H1 (cell line): ENCODE measurements at regions of chr5 and their contacts with region 1.

Region 1: GRCh38 chr5:66814146-66814991 is 218.2 kb downstream of the MAST4 start:
- DNase-seq: no peak
- H3K4me3 ChIP-seq: no peak overlapping the region
- H3K27ac ChIP-seq: no peak overlapping the region
- H3K4me1 ChIP-seq: peaks cover 0 to 4% (median 0%) of the 10 kb centered on the region in 4 experiments; a peak in 1 of 7 replicates
- H3K27me3 ChIP-seq: no peaks in the 10 kb centered on the region
- CTCF ChIP-seq: peak in 2 of 3 experiments; percentile 50 to 69; a peak in 2 of 4 replicates
- EP300 ChIP-seq: no peak
- POLR2A ChIP-seq: no peak
- RAD21 ChIP-seq: peak; percentile 59 to 68

Region 2: GRCh38 chr5:66796305-66797292 is 17.8 kb before region 1 on chr5:
- CTCF ChIA-PET with region 1: interaction called, 10 read pairs
- POLR2A ChIA-PET with region 1: no interaction called
- DNase-seq: no peak
- H3K4me3 ChIP-seq: no peak overlapping the region
- H3K27ac ChIP-seq: no peak overlapping the region
- H3K4me1 ChIP-seq: no peaks in the 10 kb centered on the region
- H3K27me3 ChIP-seq: no peaks in the 10 kb centered on the region
- CTCF ChIP-seq: peak; percentile 17 to 43 (median 33); a peak in 3 of 4 replicates
- EP300 ChIP-seq: no peak
- POLR2A ChIP-seq: no peak
- RAD21 ChIP-seq: peak; percentile 51 to 60

Region 3: GRCh38 chr5:66828548-66829357 is 14.4 kb after region 1 on chr5:
- CTCF ChIA-PET with region 1: interaction called, 16 read pairs
- POLR2A ChIA-PET with region 1: interaction called, 7 read pairs
- DNase-seq: peak in 1 of 2 experiments; percentile 57
- H3K4me3 ChIP-seq: peak overlapping the region; percentile 28 to 55 (median 40); a peak in 7 of 8 replicates
- H3K27ac ChIP-seq: no peak overlapping the region
- H3K4me1 ChIP-seq: peaks cover 3 to 17% (median 9%) of the 10 kb centered on the region in 4 experiments; a peak in 6 of 7 replicates
- H3K27me3 ChIP-seq: no peaks in the 10 kb centered on the region
- CTCF ChIP-seq: no peak
- EP300 ChIP-seq: no peak
- POLR2A ChIP-seq: no peak
- RAD21 ChIP-seq: no peak

Region 4: GRCh38 chr5:67149951-67150523 is 335.7 kb after region 1 on chr5:
- CTCF ChIA-PET with region 1: interaction called, 11 read pairs
- POLR2A ChIA-PET with region 1: no interaction called
- DNase-seq: no peak
- H3K4me3 ChIP-seq: no peak overlapping the region
- H3K27ac ChIP-seq: no peak overlapping the region
- H3K4me1 ChIP-seq: no peaks in the 10 kb centered on the region
- H3K27me3 ChIP-seq: no peaks in the 10 kb centered on the region
- CTCF ChIP-seq: peak in 2 of 3 experiments; percentile 51 to 59; a peak in 2 of 4 replicates
- EP300 ChIP-seq: no peak
- POLR2A ChIP-seq: no peak
- RAD21 ChIP-seq: peak; percentile 82 to 85